ENCODE measurements at regions of chr1 and their contacts with region 1.

Region 1: DNA sequence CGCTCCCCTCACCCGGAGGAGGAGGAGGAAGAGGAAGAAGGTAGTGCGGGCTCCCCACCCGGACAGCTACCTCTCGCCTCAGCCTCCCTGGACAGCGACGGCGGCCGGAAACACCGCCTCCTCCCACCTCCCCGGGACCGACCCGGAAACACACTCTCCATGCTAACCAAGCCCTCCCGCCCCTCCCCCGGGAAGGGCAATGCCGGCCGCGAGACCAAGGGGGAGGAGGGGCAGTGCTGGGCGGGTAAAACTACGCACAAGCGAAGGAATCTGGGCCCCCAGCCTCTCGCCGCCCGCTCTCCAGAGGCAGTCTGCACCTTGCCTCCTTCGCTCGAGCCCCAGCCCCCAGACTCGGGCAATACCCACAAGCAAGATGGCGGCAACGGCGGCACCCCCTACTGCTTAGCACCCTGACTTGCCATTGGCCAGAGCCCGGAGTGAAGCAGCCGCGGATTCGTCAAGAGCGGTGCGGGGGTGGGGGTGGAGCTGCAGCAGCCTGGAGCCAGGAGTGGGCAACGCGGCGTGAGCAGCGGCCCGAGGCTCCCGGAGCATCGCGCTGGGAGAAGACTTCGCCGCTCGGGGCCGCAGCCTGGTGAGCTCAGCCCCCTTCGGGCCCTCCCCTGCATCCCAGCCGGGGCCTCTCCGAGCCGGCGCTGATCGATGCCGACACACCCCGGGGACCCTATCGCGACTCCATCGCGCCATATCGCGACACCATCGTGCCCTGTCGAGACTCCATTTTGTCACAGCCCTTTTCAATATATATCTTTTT is at the starts of genes KIAA0319L and NCDN:
- DNase-seq: peak; percentile 90 to 97 (median 95)
- ATAC-seq: peak; percentile 87
- H3K4me3 ChIP-seq: peak within 1 kb of the TSS; percentile 83 to 99
- H3K4me3 Mint-ChIP-seq: peak within 1 kb of the TSS; percentile 97
- H3K27ac ChIP-seq: peak within 1 kb of the TSS; percentile 63 to 83
- H3K27ac Mint-ChIP-seq: peak within 1 kb of the TSS; percentile 97
- H3K4me1 ChIP-seq: peaks cover 25% of the 10 kb centered on the region
- H3K4me1 Mint-ChIP-seq: peaks cover 61% of the 10 kb centered on the region
- H3K27me3 ChIP-seq: no peaks in the 10 kb centered on the region
- H3K27me3 Mint-ChIP-seq: no peaks in the 10 kb centered on the region
- CTCF ChIP-seq: no peak
- total RNA-seq, gene KIAA0319L: 37.0 to 39.8 TPM
- total RNA-seq, gene NCDN: 9.1 to 10.3 TPM

Region 2: GRCh38 chr1:34865981-34866761 is 691.3 kb before region 1 on chr1:
- CTCF ChIA-PET with region 1: no interaction called
- POLR2A ChIA-PET with region 1: no interaction called
- intact Hi-C with region 1: loop called (anchors 2 to 10 kb)
- DNase-seq: peak; percentile 83 to 98 (median 92)
- ATAC-seq: peak; percentile 82
- H3K4me3 ChIP-seq: peak overlapping the region; percentile 68 to 78
- H3K4me3 Mint-ChIP-seq: peak overlapping the region; percentile 88
- H3K27ac ChIP-seq: peak overlapping the region; percentile 67 to 87
- H3K27ac Mint-ChIP-seq: peak overlapping the region; percentile 87
- H3K4me1 ChIP-seq: peaks cover 56% of the 10 kb centered on the region
- H3K4me1 Mint-ChIP-seq: peaks cover 44% of the 10 kb centered on the region
- H3K27me3 ChIP-seq: no peaks in the 10 kb centered on the region
- H3K27me3 Mint-ChIP-seq: no peaks in the 10 kb centered on the region
- CTCF ChIP-seq: peak; percentile 97

Region 3: DNA sequence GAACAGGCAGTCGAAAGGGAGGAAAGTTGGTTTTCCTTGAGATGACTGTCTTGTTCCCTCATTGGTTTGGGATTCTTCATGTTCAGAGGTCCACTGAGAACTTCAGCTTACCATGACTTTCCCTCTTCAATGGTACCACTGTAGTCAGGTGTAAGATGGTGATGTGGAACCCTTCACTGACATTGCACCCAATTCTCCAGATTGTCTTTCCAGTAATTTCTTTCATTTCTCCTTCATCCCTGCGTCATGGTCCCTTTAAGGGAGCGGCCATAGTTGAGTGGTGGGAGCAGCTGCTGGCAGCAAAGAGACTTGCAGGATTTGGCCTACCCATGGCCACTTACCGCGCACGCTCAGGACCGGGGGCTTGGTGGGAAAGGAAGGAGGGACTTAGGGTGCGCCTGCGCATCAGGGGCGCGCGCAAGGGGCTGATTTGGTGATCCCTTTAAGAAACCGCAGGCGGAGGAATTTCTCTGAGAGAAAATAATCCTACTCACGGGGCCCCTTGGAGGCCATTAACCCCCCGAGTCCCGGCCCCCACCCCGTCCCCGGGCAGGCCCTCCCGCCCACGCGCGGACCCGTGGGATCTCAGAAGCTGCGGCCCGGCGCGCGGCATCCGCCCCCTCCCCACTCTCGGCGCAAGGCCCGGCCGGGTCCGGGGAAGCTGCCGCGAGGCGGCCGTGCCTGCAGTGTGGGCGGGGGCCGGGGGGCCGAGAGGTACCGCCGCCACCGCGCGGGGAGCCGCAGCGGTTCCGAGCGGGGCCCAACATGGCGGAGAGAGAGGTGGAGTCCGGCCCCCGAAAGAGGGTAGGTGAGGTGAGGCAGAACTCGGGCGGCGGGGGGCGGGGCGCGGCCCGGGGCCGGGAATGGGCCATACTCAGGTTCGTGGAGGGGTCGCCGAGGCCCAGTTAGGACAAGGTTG is 288.9 kb before region 1 on chr1 and contains the start of gene ZMYM4:
- CTCF ChIA-PET with region 1: no interaction called
- POLR2A ChIA-PET with region 1: no interaction called
- intact Hi-C with region 1: loop called in 1 of 2 experiments (anchors 2 kb)
- DNase-seq: peak; percentile 70 to 96 (median 88)
- ATAC-seq: peak; percentile 95
- H3K4me3 ChIP-seq: peak within 1 kb of the TSS; percentile 65 to 73
- H3K4me3 Mint-ChIP-seq: peak within 1 kb of the TSS; percentile 89
- H3K27ac ChIP-seq: peak within 1 kb of the TSS; percentile 40 to 68
- H3K27ac Mint-ChIP-seq: peak within 1 kb of the TSS; percentile 93
- H3K4me1 ChIP-seq: peaks cover 14% of the 10 kb centered on the region
- H3K4me1 Mint-ChIP-seq: peaks cover 38% of the 10 kb centered on the region
- H3K27me3 ChIP-seq: no peaks in the 10 kb centered on the region
- H3K27me3 Mint-ChIP-seq: peaks cover 10% of the 10 kb centered on the region
- CTCF ChIP-seq: no peak
- total RNA-seq, gene ZMYM4: 32.1 to 36.5 TPM

Region 4: DNA sequence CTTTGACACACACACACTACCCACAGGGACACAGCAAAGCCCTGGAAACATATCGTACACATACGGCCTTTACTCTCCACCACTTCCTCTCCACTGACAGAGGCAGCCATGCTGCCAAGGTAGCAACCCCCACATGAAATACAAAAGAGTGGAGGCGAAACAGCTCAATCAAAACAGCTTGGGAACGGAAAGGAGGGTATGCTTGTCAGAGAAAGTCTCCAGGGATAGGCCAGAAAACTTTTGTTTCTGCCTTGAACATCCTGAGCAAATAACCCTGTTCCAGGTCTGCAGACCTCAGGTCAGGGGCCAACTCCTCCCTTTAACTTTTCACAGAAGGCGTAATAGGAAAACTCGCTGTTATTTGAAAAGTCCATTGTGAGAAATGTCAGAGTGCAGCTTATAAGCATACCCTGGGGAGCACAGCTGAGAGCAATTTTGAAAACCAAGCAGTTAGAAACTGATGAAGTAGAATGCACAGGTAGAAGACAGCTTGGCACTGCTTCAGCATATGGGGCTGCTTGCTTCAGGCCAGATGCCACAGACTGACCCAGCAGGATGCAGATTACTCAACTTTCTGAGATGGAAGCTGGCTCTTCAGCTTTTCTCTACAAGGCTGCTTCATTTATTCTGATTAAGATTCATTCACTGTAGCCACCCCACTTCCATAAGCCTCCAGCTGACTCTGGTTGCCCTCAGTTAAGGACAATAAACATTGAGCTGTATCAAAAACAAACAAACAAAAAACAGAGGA is 18.2 kb before region 1 on chr1:
- CTCF ChIA-PET with region 1: interaction called, 5 read pairs
- POLR2A ChIA-PET with region 1: interaction called, 11 read pairs
- intact Hi-C with region 1: loop called (anchors 2 kb)
- DNase-seq: peak in 6 of 9 experiments; percentile 39 to 75 (median 62)
- ATAC-seq: peak; percentile 87
- H3K4me3 ChIP-seq: peak overlapping the region in 1 of 2 experiments; percentile 42
- H3K4me3 Mint-ChIP-seq: peak overlapping the region; percentile 73
- H3K27ac ChIP-seq: peak overlapping the region; percentile 63 to 73
- H3K27ac Mint-ChIP-seq: peak overlapping the region; percentile 94
- H3K4me1 ChIP-seq: peaks cover 76% of the 10 kb centered on the region
- H3K4me1 Mint-ChIP-seq: peaks cover 87% of the 10 kb centered on the region
- H3K27me3 ChIP-seq: no peaks in the 10 kb centered on the region
- H3K27me3 Mint-ChIP-seq: no peaks in the 10 kb centered on the region
- CTCF ChIP-seq: no peak

Region 5: DNA sequence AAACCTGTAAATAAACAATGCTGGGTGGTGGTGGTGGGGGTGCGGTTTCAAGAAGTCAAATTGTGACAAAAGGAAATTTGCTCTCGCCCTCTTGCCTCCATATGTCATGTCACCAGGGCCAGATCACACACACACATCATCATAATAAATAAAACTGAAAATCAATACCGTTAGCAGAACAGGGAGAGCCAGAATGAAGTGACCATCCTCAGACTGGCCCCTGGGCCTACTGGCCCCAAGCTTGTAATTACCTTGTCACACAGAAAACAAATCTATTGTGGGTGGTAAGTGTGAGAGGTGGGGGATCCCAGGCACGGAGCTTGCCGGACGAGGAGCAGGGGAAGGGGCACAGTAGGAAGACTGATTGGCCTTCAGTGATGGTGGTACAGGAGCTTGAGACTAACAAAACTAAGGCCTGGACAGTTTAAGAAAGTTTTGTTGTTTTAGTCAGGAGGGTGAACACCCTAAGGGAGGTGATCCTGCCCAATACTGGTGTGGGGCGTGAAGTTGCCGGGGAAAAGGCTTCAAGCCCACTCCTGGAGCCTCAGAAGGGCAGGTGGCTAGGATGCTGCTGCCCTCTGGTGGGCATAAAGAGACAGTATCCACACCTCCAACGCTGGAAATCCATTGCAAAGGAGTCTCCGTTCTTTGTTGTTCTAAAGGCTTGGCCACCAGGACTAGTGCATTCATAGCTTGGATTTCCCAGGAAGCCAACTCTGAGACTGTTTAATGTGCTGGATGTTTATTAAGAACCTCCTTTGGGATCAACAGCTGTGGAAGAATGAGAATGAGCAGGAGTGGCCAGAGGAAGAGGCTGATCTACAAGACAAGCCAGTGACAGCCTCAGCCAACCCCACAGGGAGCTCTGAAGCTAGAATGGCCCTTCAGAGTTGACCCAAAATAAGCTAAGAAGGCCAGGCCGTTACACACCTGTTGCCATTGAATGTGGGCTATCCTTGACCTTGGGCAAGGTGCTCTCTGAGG is 169.3 kb after region 1 on chr1:
- CTCF ChIA-PET with region 1: interaction called, 14 read pairs
- POLR2A ChIA-PET with region 1: no interaction called
- intact Hi-C with region 1: no loop called
- DNase-seq: peak in 8 of 9 experiments; percentile 30 to 79 (median 53)
- ATAC-seq: peak; percentile 90
- H3K4me3 ChIP-seq: no peak overlapping the region
- H3K4me3 Mint-ChIP-seq: no peak overlapping the region
- H3K27ac ChIP-seq: no peak overlapping the region
- H3K27ac Mint-ChIP-seq: no peak overlapping the region
- H3K4me1 ChIP-seq: no peaks in the 10 kb centered on the region
- H3K4me1 Mint-ChIP-seq: no peaks in the 10 kb centered on the region
- H3K27me3 ChIP-seq: no peaks in the 10 kb centered on the region
- H3K27me3 Mint-ChIP-seq: no peaks in the 10 kb centered on the region
- CTCF ChIP-seq: peak; percentile 87

Region 6: GRCh38 chr1:36223993-36224536 is 666.6 kb after region 1 on chr1 and contains the start of gene THRAP3:
- CTCF ChIA-PET with region 1: no interaction called
- POLR2A ChIA-PET with region 1: no interaction called
- intact Hi-C with region 1: loop called in 1 of 2 experiments (anchors 5 kb)
- DNase-seq: peak; percentile 99 to 100 (median 100)
- ATAC-seq: peak; percentile 86
- H3K4me3 ChIP-seq: peak within 1 kb of the TSS; percentile 86 to 87
- H3K4me3 Mint-ChIP-seq: peak within 1 kb of the TSS; percentile 97
- H3K27ac ChIP-seq: peak within 1 kb of the TSS; percentile 97 to 100
- H3K27ac Mint-ChIP-seq: peak within 1 kb of the TSS; percentile 100
- H3K4me1 ChIP-seq: peaks cover 34% of the 10 kb centered on the region
- H3K4me1 Mint-ChIP-seq: peaks cover 34% of the 10 kb centered on the region
- H3K27me3 ChIP-seq: no peaks in the 10 kb centered on the region
- H3K27me3 Mint-ChIP-seq: no peaks in the 10 kb centered on the region
- CTCF ChIP-seq: no peak
- total RNA-seq, gene THRAP3: 83.2 to 88.4 TPM

Measured in CD8-positive, alpha-beta T cell (primary cell).